Left ventricle myocardium superior (tissue), 1 donor: ENCODE measurements at regions of chr18 and their contacts with region 1.

Region 1: DNA sequence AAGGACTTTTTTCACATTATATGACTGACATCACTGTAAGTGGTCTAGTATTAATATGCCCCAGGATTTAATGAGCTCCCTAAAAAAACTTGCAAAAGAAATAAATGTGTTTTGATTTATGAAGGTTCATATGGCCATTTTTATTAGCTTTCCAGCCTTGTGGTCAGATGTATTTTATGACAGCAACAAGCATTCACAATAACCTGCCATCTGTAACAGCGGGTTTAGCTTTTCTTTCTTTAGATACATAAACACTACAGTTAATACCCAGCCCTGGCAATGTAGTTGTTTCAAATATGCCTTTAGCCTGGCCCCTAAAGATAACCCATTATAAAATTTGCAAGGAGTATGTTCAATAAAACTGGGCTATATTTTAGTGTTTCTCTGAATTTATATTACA is 1063.8 kb downstream of the SOCS6 start:
- DNase-seq: no peak
- ATAC-seq: no peak

Region 2: GRCh38 chr18:71209944-71210343 is 142.7 kb before region 1 on chr18:
- intact Hi-C with region 1: no loop called
- DNase-seq: no peak
- ATAC-seq: no peak

Region 3: DNA sequence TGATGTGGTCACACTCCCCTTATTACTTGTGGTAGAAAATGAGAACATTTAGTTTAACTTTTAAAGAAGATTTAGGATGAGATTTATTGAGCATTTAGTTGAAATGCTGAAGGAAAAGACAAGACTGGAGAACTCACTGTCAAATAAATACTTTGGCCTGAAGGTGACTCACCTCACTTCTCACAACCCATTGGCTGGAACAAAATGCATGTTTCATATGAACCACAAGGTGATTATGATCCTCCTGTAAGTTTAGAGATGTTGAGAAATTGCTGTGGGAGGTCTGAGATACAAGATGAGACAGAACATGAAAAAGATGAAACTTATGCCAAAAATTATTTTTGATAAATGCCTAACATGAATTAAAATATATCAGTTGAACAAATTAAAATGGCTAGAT is 59.3 kb before region 1 on chr18:
- intact Hi-C with region 1: no loop called
- DNase-seq: no peak
- ATAC-seq: no peak

Region 4: DNA sequence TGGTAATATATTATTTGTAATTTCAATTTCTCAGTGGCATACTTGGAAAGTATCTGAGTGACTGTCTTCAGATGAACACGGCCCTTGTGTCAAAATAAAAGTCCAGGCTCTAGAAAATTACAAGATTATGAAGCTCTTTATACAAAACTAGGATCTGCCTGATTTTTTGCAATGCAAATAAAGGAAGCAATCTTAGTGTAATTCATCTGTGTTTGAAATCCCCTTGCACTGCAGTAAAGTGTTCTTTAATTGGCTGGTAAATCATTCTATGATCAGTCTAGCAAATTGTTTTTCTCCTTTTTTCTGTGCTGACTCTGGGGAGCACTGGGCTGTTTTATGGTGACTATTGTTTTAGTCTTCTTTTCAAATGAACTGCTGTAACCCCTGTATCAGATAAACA is 24.8 kb before region 1 on chr18:
- intact Hi-C with region 1: loop called (anchors 2 kb)
- DNase-seq: no peak
- ATAC-seq: no peak